ENCODE measurements at regions of chr21 and their contacts with region 1.

Region 1: DNA sequence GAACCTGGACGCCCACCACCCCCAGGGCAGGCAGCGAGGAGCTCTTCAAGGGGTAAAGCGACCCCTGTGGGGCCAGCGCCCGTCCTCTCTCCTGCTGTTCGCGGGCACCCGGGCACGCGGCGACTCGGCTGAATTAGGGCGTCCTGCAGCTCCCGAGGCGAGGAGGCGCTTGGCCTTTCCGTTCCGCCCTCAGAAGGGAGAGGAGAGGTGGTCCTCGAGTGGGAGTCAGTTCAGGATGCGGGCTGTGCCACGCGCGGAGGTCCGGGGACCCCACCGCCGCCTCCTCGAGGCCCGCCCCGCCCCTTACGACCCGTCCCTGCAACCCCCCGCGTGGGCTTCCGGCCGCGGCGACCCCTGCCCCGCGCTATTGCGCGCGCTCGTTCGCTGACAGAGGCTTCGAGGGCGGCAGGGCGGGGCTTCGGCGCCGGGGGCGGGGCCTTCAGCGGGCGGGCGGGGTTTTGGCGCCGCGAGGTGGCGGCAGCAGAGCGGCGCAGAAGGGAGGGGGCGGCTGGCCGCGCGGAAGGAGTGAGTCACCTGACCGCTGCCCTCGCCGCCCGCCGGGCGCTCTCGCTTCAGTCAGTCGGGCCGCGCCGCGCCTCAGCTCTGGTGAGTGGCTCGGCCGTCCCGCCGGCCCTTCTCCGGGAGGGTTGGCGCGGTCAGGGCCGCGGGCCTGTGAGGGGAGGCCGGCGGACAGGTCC is at the start of gene BACH1:
- DNase-seq: peak; percentile 76 to 83 (median 80)
- H3K4me3 ChIP-seq: peak within 1 kb of the TSS; percentile 32 to 67
- H3K4me3 Mint-ChIP-seq: peak within 1 kb of the TSS; percentile 86 to 95 (median 90)
- H3K27ac ChIP-seq: peak within 1 kb of the TSS; percentile 47
- H3K27ac Mint-ChIP-seq: peak within 1 kb of the TSS; percentile 70 to 94 (median 85)
- H3K4me1 ChIP-seq: peaks cover 61% of the 10 kb centered on the region
- H3K4me1 Mint-ChIP-seq: peaks cover 50 to 84% (median 68%) of the 10 kb centered on the region in 4 donors
- H3K27me3 ChIP-seq: no peaks in the 10 kb centered on the region
- H3K27me3 Mint-ChIP-seq: no peaks in the 10 kb centered on the region
- total RNA-seq, gene BACH1: 46.5 to 49.0 TPM

Region 2: DNA sequence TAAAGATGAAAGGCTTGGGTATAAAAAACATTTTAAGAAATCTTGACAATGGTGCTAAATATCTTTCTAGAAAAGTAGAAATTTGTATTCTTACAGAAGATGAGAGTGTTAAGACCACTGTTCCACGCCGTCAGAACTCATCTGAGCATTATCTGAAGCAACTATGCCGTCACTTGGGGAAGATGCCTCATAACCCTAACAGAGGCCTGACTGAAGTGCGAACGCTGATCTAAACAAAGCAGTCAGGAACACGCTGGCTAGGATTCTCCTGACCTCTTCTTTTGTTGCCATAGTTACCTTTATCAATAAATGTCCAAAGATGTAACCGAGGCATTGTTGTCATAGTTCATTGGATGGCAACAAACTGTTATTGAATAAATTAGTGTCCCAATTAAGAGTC is 918.3 kb before region 1 on chr21:
- CTCF ChIA-PET with region 1: no interaction called
- POLR2A ChIA-PET with region 1: no interaction called
- intact Hi-C with region 1: no loop called
- DNase-seq: no peak
- H3K4me3 ChIP-seq: no peak overlapping the region
- H3K4me3 Mint-ChIP-seq: no peak overlapping the region
- H3K27ac ChIP-seq: no peak overlapping the region
- H3K27ac Mint-ChIP-seq: no peak overlapping the region
- H3K4me1 ChIP-seq: no peaks in the 10 kb centered on the region
- H3K4me1 Mint-ChIP-seq: peaks cover 0 to 2% (median 0%) of the 10 kb centered on the region in 4 donors
- H3K27me3 ChIP-seq: no peaks in the 10 kb centered on the region
- H3K27me3 Mint-ChIP-seq: peaks cover 0 to 4% of the 10 kb centered on the region in 2 donors

Region 3: DNA sequence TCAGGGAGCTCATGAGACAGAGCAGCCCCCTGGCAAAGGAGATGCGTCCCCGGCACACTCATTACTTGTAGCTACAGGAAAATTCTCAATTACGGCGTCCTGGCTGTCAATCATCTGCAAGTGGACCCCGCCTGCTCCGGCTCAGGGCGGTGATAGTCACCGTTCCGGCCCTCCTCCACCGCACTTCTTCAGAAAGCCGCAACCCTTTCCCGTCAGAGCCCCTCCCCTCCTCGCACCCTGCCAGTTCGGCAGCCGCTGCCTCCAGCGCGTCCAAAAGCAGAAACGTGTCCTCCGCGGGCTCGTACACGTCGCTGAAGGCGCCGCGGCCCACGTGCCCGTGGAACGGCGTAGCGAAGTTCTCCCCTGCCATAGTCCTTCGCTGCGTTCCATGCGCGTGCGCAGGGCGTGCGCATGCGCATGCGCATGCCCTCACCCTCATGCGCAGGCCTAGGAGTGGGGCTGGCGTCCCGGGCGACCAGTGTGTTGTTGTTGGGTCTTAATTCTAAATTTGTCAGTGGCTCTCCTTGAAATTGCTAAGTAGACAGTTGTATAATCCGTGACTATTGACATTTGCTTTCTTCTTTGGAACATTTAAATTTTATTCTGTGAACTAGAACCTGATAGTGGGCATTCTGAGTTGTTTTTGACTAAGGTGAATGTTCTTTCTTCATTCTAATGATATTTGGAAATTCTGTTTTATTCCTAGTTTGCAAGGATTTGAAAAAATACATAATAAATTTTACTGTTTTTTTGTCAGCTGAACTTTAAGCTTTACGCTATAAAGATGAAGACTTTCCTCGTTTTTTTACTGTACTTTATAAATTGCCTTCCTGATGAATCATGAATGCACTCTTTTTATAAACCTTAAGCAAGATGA is 413.3 kb before region 1 on chr21:
- CTCF ChIA-PET with region 1: no interaction called
- POLR2A ChIA-PET with region 1: no interaction called
- intact Hi-C with region 1: loop called (anchors 2 kb)
- DNase-seq: peak; percentile 92 to 95 (median 95)
- H3K4me3 ChIP-seq: peak overlapping the region; percentile 10 to 70
- H3K4me3 Mint-ChIP-seq: peak overlapping the region; percentile 92 to 98 (median 96)
- H3K27ac ChIP-seq: peak overlapping the region; percentile 87
- H3K27ac Mint-ChIP-seq: peak overlapping the region; percentile 95 to 99 (median 98)
- H3K4me1 ChIP-seq: peaks cover 20% of the 10 kb centered on the region
- H3K4me1 Mint-ChIP-seq: peaks cover 15 to 31% (median 19%) of the 10 kb centered on the region in 4 donors
- H3K27me3 ChIP-seq: no peaks in the 10 kb centered on the region
- H3K27me3 Mint-ChIP-seq: peaks cover 0 to 1% of the 10 kb centered on the region in 2 donors

Region 4: GRCh38 chr21:29024474-29025327 is 273.8 kb before region 1 on chr21 and contains the start of gene USP16:
- CTCF ChIA-PET with region 1: no interaction called
- POLR2A ChIA-PET with region 1: interaction called, 19 read pairs
- intact Hi-C with region 1: loop called (anchors 2 kb)
- DNase-seq: peak; percentile 96 to 98 (median 97)
- H3K4me3 ChIP-seq: peak within 1 kb of the TSS; percentile 57 to 71
- H3K4me3 Mint-ChIP-seq: peak within 1 kb of the TSS; percentile 96 to 99 (median 98)
- H3K27ac ChIP-seq: peak within 1 kb of the TSS; percentile 99
- H3K27ac Mint-ChIP-seq: peak within 1 kb of the TSS; percentile 97 to 100 (median 100)
- H3K4me1 ChIP-seq: peaks cover 59% of the 10 kb centered on the region
- H3K4me1 Mint-ChIP-seq: peaks cover 34 to 76% (median 57%) of the 10 kb centered on the region in 4 donors
- H3K27me3 ChIP-seq: no peaks in the 10 kb centered on the region
- H3K27me3 Mint-ChIP-seq: no peaks in the 10 kb centered on the region
- total RNA-seq, gene USP16: 53.5 to 57.2 TPM

Region 5: GRCh38 chr21:29078869-29079767 is 219.4 kb before region 1 on chr21:
- CTCF ChIA-PET with region 1: interaction called, 4 read pairs
- POLR2A ChIA-PET with region 1: interaction called, 42 read pairs
- intact Hi-C with region 1: no loop called
- DNase-seq: peak; percentile 37 to 44 (median 40)
- H3K4me3 ChIP-seq: no peak overlapping the region
- H3K4me3 Mint-ChIP-seq: peak overlapping the region; percentile 37 to 79 (median 70)
- H3K27ac ChIP-seq: peak overlapping the region; percentile 33
- H3K27ac Mint-ChIP-seq: peak overlapping the region; percentile 88 to 95 (median 93)
- H3K4me1 ChIP-seq: peaks cover 53% of the 10 kb centered on the region
- H3K4me1 Mint-ChIP-seq: peaks cover 22 to 71% (median 48%) of the 10 kb centered on the region in 4 donors
- H3K27me3 ChIP-seq: no peaks in the 10 kb centered on the region
- H3K27me3 Mint-ChIP-seq: no peaks in the 10 kb centered on the region

Region 6: DNA sequence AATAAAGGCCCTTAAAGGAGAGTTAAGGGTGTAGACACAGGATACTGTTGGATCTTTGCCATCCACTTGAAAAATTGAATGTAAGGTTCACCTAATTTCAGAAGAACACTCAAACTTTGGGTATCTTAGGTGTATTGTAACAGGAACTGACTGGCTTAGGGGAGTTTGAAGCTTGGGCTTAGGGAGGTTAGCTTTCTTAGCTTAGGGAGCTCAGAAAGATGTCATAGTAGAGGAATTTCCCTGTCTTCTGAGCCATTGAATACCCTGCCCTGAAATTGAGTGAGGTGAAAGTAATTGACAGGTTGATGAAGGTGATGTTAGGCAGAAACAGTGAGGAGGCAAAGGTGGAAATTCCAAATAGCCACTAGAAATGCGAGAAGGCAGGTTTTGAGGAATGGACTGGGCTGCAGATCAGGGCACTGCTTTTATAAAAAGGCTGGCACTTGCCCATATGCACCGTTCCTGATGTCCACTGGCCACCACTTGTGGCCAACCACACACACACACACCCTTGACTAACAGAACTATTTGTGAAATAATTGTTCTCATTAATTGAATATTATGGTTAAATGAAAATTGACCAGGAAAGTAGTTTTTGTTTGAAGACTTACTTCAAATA is 16.7 kb after region 1 on chr21:
- CTCF ChIA-PET with region 1: interaction called, 11 read pairs
- POLR2A ChIA-PET with region 1: interaction called, 10 read pairs
- intact Hi-C with region 1: no loop called
- DNase-seq: no peak
- H3K4me3 ChIP-seq: no peak overlapping the region
- H3K4me3 Mint-ChIP-seq: no peak overlapping the region
- H3K27ac ChIP-seq: no peak overlapping the region
- H3K27ac Mint-ChIP-seq: peak overlapping the region in 2 of 7 donors; percentile 2 to 17
- H3K4me1 ChIP-seq: peaks cover 10% of the 10 kb centered on the region
- H3K4me1 Mint-ChIP-seq: peaks cover 47 to 83% (median 61%) of the 10 kb centered on the region in 4 donors
- H3K27me3 ChIP-seq: no peaks in the 10 kb centered on the region
- H3K27me3 Mint-ChIP-seq: no peaks in the 10 kb centered on the region

Region 7: GRCh38 chr21:29372063-29372802 is 73.7 kb after region 1 on chr21:
- CTCF ChIA-PET with region 1: interaction called, 13 read pairs
- POLR2A ChIA-PET with region 1: no interaction called
- intact Hi-C with region 1: no loop called
- DNase-seq: peak; percentile 58 to 72 (median 67)
- H3K4me3 ChIP-seq: no peak overlapping the region
- H3K4me3 Mint-ChIP-seq: no peak overlapping the region
- H3K27ac ChIP-seq: no peak overlapping the region
- H3K27ac Mint-ChIP-seq: peak overlapping the region in 3 of 7 donors; percentile 57 to 63 (median 63)
- H3K4me1 ChIP-seq: peaks cover 8% of the 10 kb centered on the region
- H3K4me1 Mint-ChIP-seq: peaks cover 9 to 15% (median 10%) of the 10 kb centered on the region in 4 donors
- H3K27me3 ChIP-seq: no peaks in the 10 kb centered on the region
- H3K27me3 Mint-ChIP-seq: no peaks in the 10 kb centered on the region

Measured in CD4-positive, alpha-beta memory T cell (primary cell).